ENCODE measurements at regions of chr9 and their contacts with region 1.

Region 1: GRCh38 chr9:77475641-77476473 is 172.3 kb downstream of the GNA14 start:
- DNase-seq: peak; percentile 84
- ATAC-seq: peak; percentile 99
- H3K4me3 Mint-ChIP-seq: peak overlapping the region; percentile 9
- H3K27ac Mint-ChIP-seq: peak overlapping the region; percentile 94
- H3K4me1 Mint-ChIP-seq: peaks cover 31% of the 10 kb centered on the region
- H3K27me3 Mint-ChIP-seq: no peaks in the 10 kb centered on the region

Region 2: DNA sequence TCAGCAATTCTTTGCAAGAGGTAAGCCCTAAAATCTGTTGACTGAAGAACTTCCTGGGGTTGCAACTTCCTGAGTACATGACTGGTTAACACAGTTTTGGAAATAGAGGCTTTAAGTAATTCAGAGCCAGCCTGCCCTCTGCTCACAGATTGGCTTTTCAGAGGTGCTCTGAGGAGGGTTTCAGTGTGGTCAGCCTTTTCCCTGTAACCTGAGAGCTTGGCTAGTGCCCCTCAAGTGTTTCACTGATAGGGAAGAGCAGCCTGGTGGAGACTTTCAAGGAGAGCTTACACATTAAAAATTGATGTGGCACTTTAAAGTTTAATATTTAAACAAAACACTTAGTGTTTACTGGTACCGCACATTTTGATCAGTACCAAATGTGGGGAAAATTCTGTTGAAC is 513.1 kb before region 1 on chr9:
- CTCF ChIA-PET with region 1: no interaction called
- POLR2A ChIA-PET with region 1: no interaction called
- intact Hi-C with region 1: no loop called
- DNase-seq: no peak
- ATAC-seq: no peak
- H3K4me3 Mint-ChIP-seq: no peak overlapping the region
- H3K27ac Mint-ChIP-seq: no peak overlapping the region
- H3K4me1 Mint-ChIP-seq: no peaks in the 10 kb centered on the region
- H3K27me3 Mint-ChIP-seq: peaks cover 7% of the 10 kb centered on the region

Region 3: DNA sequence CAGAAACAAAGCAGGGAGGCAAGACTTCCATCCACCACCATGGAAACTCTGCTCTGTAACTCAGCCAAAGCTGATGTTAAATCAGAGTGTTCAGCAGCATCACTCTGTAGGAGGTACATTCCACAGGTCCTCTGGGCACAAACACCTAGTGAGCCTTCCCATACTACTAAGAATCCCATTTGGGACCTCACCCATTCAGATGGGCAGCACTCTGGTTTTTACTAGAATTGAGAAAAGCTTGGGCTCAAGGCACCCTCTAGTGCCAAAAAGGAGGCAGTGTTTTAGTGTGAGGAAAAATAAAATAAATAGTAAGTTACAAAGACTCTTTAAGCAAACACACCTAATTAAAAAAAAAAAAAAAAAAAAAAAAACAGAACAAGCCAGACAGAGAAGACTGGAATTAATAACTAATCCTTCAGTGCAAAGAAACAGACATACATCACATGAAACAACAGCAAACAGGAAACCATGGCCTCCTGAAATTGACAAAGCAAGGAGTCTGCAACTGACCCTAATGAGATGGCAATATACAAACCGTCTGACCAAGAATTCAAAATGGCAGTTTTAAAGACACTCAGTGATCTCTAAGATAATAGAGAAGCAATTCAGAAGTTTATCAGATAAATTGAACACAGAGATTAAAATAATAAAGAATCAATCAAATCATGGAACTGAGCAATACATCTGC is 12.7 kb after region 1 on chr9:
- CTCF ChIA-PET with region 1: interaction called, 10 read pairs
- POLR2A ChIA-PET with region 1: no interaction called
- intact Hi-C with region 1: loop called in 1 of 2 experiments (anchors 1 kb)
- DNase-seq: no peak
- ATAC-seq: peak; percentile 45
- H3K4me3 Mint-ChIP-seq: peak overlapping the region; percentile 57
- H3K27ac Mint-ChIP-seq: no peak overlapping the region
- H3K4me1 Mint-ChIP-seq: peaks cover 20% of the 10 kb centered on the region
- H3K27me3 Mint-ChIP-seq: peaks cover 3% of the 10 kb centered on the region

Region 4: GRCh38 chr9:77743386-77743785 is 267.5 kb after region 1 on chr9:
- CTCF ChIA-PET with region 1: no interaction called
- POLR2A ChIA-PET with region 1: no interaction called
- intact Hi-C with region 1: loop called in 1 of 2 experiments (anchors 5 kb)
- DNase-seq: no peak
- ATAC-seq: no peak
- H3K4me3 Mint-ChIP-seq: no peak overlapping the region
- H3K27ac Mint-ChIP-seq: no peak overlapping the region
- H3K4me1 Mint-ChIP-seq: peaks cover 61% of the 10 kb centered on the region
- H3K27me3 Mint-ChIP-seq: no peaks in the 10 kb centered on the region

Region 5: GRCh38 chr9:78121488-78121887 is 645.6 kb after region 1 on chr9:
- CTCF ChIA-PET with region 1: no interaction called
- POLR2A ChIA-PET with region 1: no interaction called
- intact Hi-C with region 1: loop called in 1 of 2 experiments (anchors 5 kb)
- DNase-seq: peak; percentile 79
- ATAC-seq: no peak
- H3K4me3 Mint-ChIP-seq: no peak overlapping the region
- H3K27ac Mint-ChIP-seq: no peak overlapping the region
- H3K4me1 Mint-ChIP-seq: peaks cover 37% of the 10 kb centered on the region
- H3K27me3 Mint-ChIP-seq: no peaks in the 10 kb centered on the region